PC-9 (cell line): ENCODE measurements at regions of chr9 and their contacts with region 1.

Region 1: GRCh38 chr9:90914868-90915483 is 113.4 kb downstream of the SYK start:
- DNase-seq: peak; percentile 56 to 75
- H3K4me3 ChIP-seq: no peak overlapping the region
- H3K27ac ChIP-seq: no peak overlapping the region
- H3K4me1 ChIP-seq: peaks cover 4% of the 10 kb centered on the region; the same call in 1 of the 2 replicates
- H3K27me3 ChIP-seq: no peaks in the 10 kb centered on the region
- CTCF ChIP-seq: peak; percentile 87

Region 2: GRCh38 chr9:90958328-90958727 is 43.4 kb after region 1 on chr9:
- CTCF ChIA-PET with region 1: interaction called, 15 read pairs
- POLR2A ChIA-PET with region 1: no interaction called
- intact Hi-C with region 1: no loop called
- DNase-seq: peak; percentile 68 to 82
- H3K4me3 ChIP-seq: no peak overlapping the region
- H3K27ac ChIP-seq: peak overlapping the region; percentile 36
- H3K4me1 ChIP-seq: peaks cover 35% of the 10 kb centered on the region
- H3K27me3 ChIP-seq: no peaks in the 10 kb centered on the region
- CTCF ChIP-seq: no peak

Region 3: GRCh38 chr9:91001146-91001611 is 86.2 kb after region 1 on chr9:
- CTCF ChIA-PET with region 1: no interaction called
- POLR2A ChIA-PET with region 1: interaction called, 13 read pairs
- intact Hi-C with region 1: no loop called
- DNase-seq: peak; percentile 94 to 98
- H3K4me3 ChIP-seq: no peak overlapping the region
- H3K27ac ChIP-seq: peak overlapping the region; percentile 74
- H3K4me1 ChIP-seq: peaks cover 22% of the 10 kb centered on the region
- H3K27me3 ChIP-seq: no peaks in the 10 kb centered on the region
- CTCF ChIP-seq: no peak

Region 4: GRCh38 chr9:91089405-91090129 is 174.6 kb after region 1 on chr9:
- CTCF ChIA-PET with region 1: no interaction called
- POLR2A ChIA-PET with region 1: no interaction called
- intact Hi-C with region 1: loop called (anchors 1 kb)
- DNase-seq: peak in 1 of 2 experiments; percentile 21
- H3K4me3 ChIP-seq: no peak overlapping the region
- H3K27ac ChIP-seq: no peak overlapping the region
- H3K4me1 ChIP-seq: no peaks in the 10 kb centered on the region
- H3K27me3 ChIP-seq: no peaks in the 10 kb centered on the region
- CTCF ChIP-seq: peak; percentile 47

Region 5: GRCh38 chr9:91422758-91423711 is 508.1 kb after region 1 on chr9:
- CTCF ChIA-PET with region 1: interaction called, 23 read pairs
- POLR2A ChIA-PET with region 1: no interaction called
- intact Hi-C with region 1: loop called (anchors 1 kb)
- DNase-seq: peak; percentile 57 to 65
- H3K4me3 ChIP-seq: peak overlapping the region; percentile 91
- H3K27ac ChIP-seq: peak overlapping the region; percentile 71
- H3K4me1 ChIP-seq: peaks cover 49% of the 10 kb centered on the region
- H3K27me3 ChIP-seq: no peaks in the 10 kb centered on the region
- CTCF ChIP-seq: no peak

Region 6: GRCh38 chr9:91676046-91676445 is 761.1 kb after region 1 on chr9:
- CTCF ChIA-PET with region 1: interaction called, 3 read pairs
- POLR2A ChIA-PET with region 1: no interaction called
- intact Hi-C with region 1: loop called (anchors 1 kb)
- DNase-seq: peak; percentile 51 to 64
- H3K4me3 ChIP-seq: no peak overlapping the region
- H3K27ac ChIP-seq: no peak overlapping the region
- H3K4me1 ChIP-seq: no peaks in the 10 kb centered on the region
- H3K27me3 ChIP-seq: no peaks in the 10 kb centered on the region
- CTCF ChIP-seq: peak; percentile 74

Region 7: DNA sequence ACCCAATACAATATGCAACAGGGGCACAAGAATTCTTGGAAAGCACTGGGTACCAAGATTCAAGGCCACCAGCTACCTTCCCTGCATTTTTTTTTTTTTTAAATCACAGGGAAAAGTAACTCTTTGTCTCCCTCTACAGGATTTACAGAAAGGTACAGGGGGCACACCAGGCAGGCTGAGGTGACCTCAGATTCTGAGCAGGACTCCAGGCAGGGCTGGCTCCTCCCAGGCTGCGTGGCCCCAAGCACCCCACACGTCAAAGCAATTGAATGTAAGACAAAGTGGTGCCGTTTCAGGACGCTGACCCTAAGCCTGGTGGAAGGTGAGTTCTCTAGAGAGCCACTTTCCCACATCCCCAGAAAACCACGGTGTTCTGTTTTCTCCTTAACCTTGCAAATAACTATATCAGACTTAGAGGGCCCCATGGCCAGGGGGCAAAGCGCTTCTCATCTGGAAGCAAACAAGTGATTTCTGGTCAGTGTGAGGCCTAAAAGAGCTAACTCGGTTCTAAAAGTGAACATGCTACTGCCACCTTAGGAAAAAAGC is 812.4 kb after region 1 on chr9:
- CTCF ChIA-PET with region 1: interaction called, 3 read pairs
- POLR2A ChIA-PET with region 1: no interaction called
- intact Hi-C with region 1: loop called (anchors 1 kb)
- DNase-seq: peak; percentile 37 to 48
- H3K4me3 ChIP-seq: no peak overlapping the region
- H3K27ac ChIP-seq: no peak overlapping the region
- H3K4me1 ChIP-seq: no peaks in the 10 kb centered on the region
- H3K27me3 ChIP-seq: 0 out of 2 replicates have a peak, but pooled peaks cover 8% of the 10 kb centered on the region
- CTCF ChIP-seq: peak; percentile 84